BJ (cell line): ENCODE measurements at regions of chr5 and their contacts with region 1.

Region 1: DNA sequence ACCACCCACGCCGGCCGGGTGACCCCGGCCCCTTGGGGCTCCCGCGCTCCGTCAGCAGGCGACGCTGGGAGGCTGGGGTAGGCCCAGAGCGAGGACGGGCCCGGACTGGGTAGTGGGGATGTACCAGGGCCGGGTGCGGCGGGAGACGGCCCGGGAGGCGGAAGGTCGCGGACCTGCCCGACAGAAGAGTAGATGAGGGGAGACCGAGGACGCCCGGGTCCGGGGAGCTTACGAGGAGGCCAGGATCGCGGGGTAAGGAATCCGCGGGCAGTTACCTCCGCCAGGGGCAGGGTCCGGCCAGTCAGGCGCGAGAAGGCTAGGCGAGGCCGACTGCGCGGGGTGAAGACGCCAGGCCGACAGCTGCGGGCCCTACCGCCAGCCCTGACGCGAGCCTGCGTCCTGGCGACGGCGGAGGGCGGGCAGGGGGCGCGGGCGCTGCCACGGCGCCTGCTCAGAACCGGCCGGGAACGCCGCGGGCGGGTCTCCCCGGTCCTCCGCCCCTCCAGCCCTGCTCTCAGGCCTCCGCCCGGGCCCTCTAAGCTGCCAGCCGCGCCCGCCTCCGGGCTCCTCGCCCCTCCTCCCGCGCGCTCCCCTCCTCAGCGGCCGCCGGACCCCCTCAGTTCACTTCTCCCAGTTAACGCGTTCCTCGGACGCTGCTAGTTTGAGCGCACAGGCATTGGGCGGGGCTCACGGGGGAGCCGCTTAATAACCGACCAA is at the start of gene CPLANE1:
- DNase-seq: peak; percentile 27
- H3K4me3 ChIP-seq: peak within 1 kb of the TSS; percentile 92
- H3K27me3 ChIP-seq: no peaks in the 10 kb centered on the region
- CTCF ChIP-seq: 0 out of 2 replicates have a peak, but pooled peaks have one; percentile 16
- polyA plus RNA-seq, gene CPLANE1: 6.8 and 17.2 TPM in 2 replicates

Region 2: DNA sequence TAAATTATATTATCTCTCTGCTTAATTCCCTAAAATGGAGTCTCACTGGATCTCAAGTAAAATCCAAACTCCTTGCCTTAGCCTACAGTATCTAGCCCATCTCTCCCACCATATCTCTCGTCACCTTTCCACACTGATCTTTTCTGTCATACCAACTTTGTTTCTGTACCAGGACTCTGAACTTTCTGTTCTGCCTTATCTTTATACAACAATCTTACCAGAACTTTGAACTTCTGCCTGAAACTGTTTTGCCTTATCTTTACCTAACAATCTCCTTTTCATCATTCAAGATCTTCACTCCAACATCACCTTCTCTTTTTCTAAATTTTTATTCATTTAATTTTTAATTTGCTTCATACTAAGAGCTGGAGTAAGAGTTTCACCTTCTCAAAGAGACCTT is 139.0 kb before region 1 on chr5:
- CTCF ChIA-PET with region 1: no interaction called
- POLR2A ChIA-PET with region 1: no interaction called
- DNase-seq: no peak
- H3K4me3 ChIP-seq: no peak overlapping the region
- H3K27me3 ChIP-seq: no peaks in the 10 kb centered on the region
- CTCF ChIP-seq: no peak

Region 3: DNA sequence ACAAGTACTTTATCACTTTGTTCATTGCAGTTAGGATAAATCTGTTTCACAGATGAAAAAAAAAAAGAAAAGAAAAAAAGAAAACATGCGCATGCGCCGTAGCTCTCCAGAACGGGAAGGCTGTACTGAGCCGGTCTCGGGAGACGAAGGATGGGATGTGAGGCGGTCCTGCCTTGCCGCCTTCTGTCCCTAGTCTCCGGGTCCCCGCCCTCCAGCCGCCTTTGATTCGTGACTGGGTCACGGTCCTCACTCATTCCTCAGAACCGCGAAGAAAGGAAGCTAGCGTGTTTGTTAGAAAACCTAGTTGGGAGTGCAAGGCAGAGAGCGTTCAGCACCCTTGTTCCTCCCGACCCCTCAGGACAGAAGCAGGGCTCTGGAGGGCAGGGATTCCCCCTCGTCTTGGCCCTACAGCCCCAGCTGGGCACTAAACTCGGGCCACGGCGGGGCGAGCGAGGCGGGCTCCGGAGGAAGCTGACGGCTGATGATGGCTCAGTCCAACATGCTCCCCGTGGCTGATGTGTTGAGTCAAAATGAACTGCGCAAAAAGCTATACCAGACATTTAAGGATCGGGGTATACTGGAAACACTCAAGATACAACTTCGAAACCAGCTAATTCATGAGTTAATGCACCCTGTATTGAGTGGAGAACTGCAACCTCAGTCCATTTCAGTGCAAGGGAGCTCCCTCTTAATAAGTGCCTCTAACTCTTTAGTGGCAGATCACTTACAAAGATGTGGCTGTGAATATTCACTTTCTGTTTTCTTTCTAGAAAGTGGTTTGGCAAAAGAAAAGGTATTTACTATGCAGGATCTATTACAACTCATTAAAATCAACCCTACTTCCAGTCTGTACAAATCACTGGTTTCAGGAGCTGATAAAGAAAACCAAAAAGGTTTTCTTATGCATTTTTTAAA is 40.0 kb before region 1 on chr5:
- CTCF ChIA-PET with region 1: no interaction called
- POLR2A ChIA-PET with region 1: interaction called, 15 read pairs
- DNase-seq: no peak
- H3K4me3 ChIP-seq: peak overlapping the region; percentile 24
- H3K27me3 ChIP-seq: no peaks in the 10 kb centered on the region
- CTCF ChIP-seq: no peak

Region 4: DNA sequence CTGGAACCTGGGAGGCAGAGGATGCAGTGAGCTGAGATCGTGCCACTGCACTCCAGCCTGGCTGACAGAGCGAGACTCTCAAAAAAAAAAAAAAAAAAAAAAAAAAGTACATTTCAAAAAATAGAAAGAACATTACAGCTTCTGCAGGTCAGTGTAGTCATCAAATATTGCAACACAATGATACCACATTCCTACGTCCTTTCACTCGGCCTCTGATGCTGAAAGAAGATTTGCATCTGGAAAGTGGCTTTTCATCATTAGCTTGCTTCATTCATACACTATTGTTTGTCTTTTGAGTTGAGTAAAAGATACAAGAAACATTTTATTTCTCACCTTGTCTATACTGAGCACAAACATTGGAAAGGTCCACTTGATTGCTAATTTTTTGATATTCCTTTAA is 59.7 kb after region 1 on chr5:
- CTCF ChIA-PET with region 1: no interaction called
- POLR2A ChIA-PET with region 1: no interaction called
- DNase-seq: no peak
- H3K4me3 ChIP-seq: no peak overlapping the region
- H3K27me3 ChIP-seq: no peaks in the 10 kb centered on the region
- CTCF ChIP-seq: no peak